ENCODE measurements at regions of chr19 and their contacts with region 1.

Region 1: DNA sequence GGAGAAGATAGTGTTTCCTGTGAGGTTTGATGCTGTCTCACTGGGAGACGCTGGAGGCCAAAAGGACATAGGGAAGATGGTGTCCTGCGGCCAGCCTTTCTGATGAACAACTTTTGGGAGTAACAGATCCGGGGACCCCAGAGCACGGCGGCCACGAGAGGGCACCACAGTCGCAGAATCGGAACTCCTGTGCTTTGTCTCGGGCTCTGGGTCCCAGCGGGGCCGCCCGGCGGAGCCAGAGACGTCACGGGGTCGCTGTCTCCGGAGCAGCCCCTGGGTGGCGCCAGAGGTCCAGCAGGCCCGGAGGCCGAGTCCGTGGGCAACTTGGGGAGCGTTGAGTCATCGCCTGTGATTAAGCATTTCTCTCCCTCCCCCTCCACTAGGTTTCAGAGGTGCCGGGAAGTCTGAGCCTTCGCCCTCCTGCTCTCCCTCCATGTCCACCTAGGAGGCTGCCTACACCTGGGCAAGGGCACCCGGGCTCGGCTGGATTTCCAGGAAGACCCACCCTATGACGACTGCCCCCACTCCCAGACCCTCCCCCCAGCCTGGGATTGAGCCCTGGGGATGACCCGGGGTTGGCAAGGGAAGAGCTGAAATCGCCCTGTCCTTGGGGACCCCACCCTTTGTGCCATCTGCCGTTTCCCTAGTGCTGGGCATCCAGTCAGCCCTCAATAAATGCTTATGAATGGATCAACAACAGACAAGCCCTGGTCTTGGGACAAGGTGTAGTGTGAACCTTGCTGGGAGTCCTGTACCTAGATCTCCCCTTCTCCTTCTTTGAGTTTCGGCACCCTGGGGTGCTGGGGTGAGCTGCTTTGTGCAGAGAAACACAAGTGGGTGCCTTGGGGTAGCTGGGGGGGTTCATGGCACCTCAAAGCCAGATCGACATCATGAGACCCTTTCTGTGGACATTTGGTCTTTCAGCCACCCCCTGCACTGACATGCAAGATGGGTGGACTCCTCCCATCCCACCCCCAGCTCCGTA is 3.4 kb downstream of the NANOS3 start:
- DNase-seq: peak; percentile 98
- ATAC-seq: peak; percentile 83
- H3K4me3 Mint-ChIP-seq: peak overlapping the region; percentile 41
- H3K27ac Mint-ChIP-seq: peak overlapping the region; percentile 82
- H3K4me1 Mint-ChIP-seq: peaks cover 26% of the 10 kb centered on the region
- H3K27me3 Mint-ChIP-seq: peaks cover 36% of the 10 kb centered on the region
- CTCF ChIP-seq: peak; percentile 88

Region 2: GRCh38 chr19:13794757-13795589 is 85.4 kb before region 1 on chr19 and contains the start of gene ZSWIM4:
- CTCF ChIA-PET with region 1: no interaction called
- POLR2A ChIA-PET with region 1: no interaction called
- DNase-seq: peak; percentile 100
- ATAC-seq: peak; percentile 91
- H3K4me3 Mint-ChIP-seq: peak within 1 kb of the TSS; percentile 92
- H3K27ac Mint-ChIP-seq: peak within 1 kb of the TSS; percentile 98
- H3K4me1 Mint-ChIP-seq: peaks cover 16% of the 10 kb centered on the region
- H3K27me3 Mint-ChIP-seq: no peaks in the 10 kb centered on the region
- CTCF ChIP-seq: no peak
- total RNA-seq, gene ZSWIM4: 33.4 to 35.5 TPM (median 34.2 TPM) in 3 replicates

Region 3: DNA sequence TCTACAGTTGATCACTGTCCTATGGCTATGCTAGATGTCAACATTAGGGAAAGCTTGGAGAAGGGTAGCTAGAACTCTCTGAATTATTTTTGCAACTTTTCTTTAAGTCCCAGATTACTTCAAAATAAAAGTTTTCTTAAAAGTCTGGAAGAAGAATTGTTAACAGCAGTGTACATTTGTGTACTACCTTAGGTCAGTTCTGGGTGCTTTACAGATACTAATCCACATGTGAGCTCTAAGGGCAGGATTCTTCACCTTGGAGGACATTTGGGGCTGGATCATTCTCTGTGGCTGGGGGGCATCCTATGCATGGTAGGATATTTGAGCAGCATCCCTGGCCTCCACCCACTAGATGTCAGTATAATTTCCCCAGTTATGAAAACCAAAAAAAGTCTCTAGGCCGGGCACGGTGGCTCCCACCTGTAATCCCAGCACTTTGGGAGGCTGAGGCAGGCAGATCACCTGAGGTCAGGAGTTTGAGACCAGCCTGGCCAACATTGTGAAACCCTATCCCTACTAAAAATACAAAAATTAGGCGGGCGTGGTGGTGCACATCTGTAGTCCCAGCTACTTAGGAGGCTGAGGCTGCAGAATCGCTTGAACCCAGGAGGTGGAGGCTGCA is 22.8 kb after region 1 on chr19:
- CTCF ChIA-PET with region 1: interaction called, 12 read pairs
- POLR2A ChIA-PET with region 1: no interaction called
- DNase-seq: no peak
- ATAC-seq: no peak; the same call in 1 of the 2 replicates
- H3K4me3 Mint-ChIP-seq: no peak overlapping the region
- H3K27ac Mint-ChIP-seq: no peak overlapping the region
- H3K4me1 Mint-ChIP-seq: peaks cover 9% of the 10 kb centered on the region
- H3K27me3 Mint-ChIP-seq: peaks cover 20% of the 10 kb centered on the region
- CTCF ChIP-seq: no peak

Region 4: DNA sequence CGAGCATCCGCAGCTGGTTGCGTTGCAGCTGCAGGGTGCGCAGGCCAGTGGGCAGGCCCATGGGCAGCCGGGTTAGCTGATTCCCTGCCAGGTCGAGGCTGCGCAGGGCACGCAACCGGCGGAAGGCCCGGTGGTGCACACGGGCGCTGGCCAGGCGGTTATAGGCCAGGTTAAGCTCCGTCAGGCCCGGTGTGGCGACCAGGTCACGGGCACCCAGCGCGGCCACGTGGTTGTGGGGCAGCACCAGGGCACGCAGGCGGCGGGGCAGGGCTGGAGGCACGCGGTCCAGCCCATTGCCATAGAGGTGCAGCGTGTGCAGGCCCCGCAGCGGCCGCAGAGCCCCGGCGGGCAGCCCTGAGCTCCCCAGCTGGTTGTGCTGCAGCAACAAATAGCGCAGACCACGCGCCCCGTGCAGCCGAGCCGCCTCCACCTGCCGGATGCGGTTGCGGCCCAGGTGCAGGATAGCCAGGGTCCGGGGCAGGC is 52.6 kb after region 1 on chr19:
- CTCF ChIA-PET with region 1: interaction called, 20 read pairs
- POLR2A ChIA-PET with region 1: interaction called, 3 read pairs
- DNase-seq: peak; percentile 23
- ATAC-seq: no peak
- H3K4me3 Mint-ChIP-seq: no peak overlapping the region
- H3K27ac Mint-ChIP-seq: peak overlapping the region; percentile 59; the same call in 1 of the 2 replicates
- H3K4me1 Mint-ChIP-seq: peaks cover 29% of the 10 kb centered on the region
- H3K27me3 Mint-ChIP-seq: no peaks in the 10 kb centered on the region
- CTCF ChIP-seq: no peak

Region 5: DNA sequence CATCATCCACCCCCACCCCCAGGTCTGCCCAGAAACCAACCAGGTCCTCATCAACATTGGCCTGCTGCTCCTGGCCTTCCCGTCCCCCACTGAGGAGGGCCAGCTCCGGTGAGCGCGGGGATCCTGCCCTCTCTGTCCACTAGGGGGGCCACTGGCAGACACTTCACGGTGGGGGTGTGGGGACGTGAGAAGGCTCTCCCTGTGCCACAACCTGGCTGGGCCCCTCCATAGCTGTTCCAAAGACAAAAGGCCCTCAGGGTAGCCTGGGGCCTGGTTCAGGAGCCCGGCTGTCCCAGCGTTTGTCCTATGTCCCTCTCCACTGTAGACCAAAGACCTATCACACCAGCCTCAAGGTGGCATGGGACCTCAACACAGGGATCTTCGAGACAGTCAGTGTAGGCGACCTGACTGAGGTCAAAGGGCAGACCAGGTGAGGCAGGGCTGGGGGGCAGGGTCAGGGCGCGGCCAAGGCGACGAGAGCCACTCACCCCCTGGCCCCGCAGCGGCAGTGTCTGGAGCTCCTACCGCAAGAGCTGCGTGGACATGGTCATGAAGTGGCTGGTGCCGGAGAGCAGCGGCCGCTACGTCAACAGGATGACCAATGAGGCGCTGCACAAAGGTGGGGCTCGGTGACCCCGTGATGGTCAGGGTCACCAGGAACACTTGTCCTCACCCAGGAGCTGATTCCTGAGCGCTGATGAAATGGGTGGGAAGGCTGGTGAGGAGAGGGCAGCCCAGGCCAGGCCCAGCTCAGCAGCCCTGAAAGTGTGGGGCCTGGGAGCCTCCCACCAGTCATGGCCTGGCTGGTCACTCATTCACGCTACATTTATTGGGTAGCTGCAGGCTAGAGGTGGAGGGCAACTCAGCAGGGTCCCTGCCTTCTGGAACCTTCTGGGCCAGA is 79.9 kb after region 1 on chr19:
- CTCF ChIA-PET with region 1: interaction called, 14 read pairs
- POLR2A ChIA-PET with region 1: interaction called, 4 read pairs
- DNase-seq: peak; percentile 61
- ATAC-seq: peak; percentile 9
- H3K4me3 Mint-ChIP-seq: no peak overlapping the region
- H3K27ac Mint-ChIP-seq: peak overlapping the region; percentile 87
- H3K4me1 Mint-ChIP-seq: peaks cover 6% of the 10 kb centered on the region
- H3K27me3 Mint-ChIP-seq: peaks cover 3% of the 10 kb centered on the region
- CTCF ChIP-seq: peak; percentile 8; the same call in 1 of the 2 replicates

Region 6: DNA sequence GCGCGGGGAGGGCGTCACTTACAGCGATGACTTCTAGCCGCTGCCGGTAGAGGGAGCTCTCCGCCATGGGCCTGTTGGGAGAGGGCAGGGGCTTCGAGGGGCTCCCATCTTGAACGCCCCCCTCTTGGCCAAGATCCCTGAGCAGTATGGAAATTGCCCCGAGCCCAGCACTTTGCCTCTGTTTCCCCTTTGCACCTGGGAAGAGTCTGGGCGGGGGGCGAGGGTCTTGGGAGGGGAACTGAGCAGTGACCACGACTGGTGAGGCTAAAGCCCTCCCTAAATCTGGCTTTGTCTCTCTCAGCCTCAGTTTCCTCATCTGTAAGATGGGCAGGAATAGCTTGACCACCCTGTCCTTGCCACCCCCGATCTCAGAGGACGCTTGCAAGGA is 178.7 kb after region 1 on chr19:
- CTCF ChIA-PET with region 1: interaction called, 14 read pairs
- POLR2A ChIA-PET with region 1: interaction called, 3 read pairs
- DNase-seq: peak; percentile 78
- ATAC-seq: peak; percentile 50
- H3K4me3 Mint-ChIP-seq: peak overlapping the region; percentile 86
- H3K27ac Mint-ChIP-seq: no peak overlapping the region
- H3K4me1 Mint-ChIP-seq: peaks cover 16% of the 10 kb centered on the region
- H3K27me3 Mint-ChIP-seq: peaks cover 32% of the 10 kb centered on the region
- CTCF ChIP-seq: peak; percentile 87

Measured in WTC11 (cell line).